Right lobe of liver (tissue), 6 donors: ENCODE measurements at regions of chr17 and their contacts with region 1.

Region 1: GRCh38 chr17:43140396-43141332 is 15.5 kb upstream of the BRCA1 start:
- DNase-seq: no peak
- ATAC-seq: no peak
- H3K4me3 ChIP-seq: no peak overlapping the region
- H3K27ac ChIP-seq: no peak overlapping the region
- H3K4me1 ChIP-seq: no peaks in the 10 kb centered on the region
- H3K27me3 ChIP-seq: no peaks in the 10 kb centered on the region
- CTCF ChIP-seq: no peak
- POLR2A ChIP-seq: no peak

Region 2: DNA sequence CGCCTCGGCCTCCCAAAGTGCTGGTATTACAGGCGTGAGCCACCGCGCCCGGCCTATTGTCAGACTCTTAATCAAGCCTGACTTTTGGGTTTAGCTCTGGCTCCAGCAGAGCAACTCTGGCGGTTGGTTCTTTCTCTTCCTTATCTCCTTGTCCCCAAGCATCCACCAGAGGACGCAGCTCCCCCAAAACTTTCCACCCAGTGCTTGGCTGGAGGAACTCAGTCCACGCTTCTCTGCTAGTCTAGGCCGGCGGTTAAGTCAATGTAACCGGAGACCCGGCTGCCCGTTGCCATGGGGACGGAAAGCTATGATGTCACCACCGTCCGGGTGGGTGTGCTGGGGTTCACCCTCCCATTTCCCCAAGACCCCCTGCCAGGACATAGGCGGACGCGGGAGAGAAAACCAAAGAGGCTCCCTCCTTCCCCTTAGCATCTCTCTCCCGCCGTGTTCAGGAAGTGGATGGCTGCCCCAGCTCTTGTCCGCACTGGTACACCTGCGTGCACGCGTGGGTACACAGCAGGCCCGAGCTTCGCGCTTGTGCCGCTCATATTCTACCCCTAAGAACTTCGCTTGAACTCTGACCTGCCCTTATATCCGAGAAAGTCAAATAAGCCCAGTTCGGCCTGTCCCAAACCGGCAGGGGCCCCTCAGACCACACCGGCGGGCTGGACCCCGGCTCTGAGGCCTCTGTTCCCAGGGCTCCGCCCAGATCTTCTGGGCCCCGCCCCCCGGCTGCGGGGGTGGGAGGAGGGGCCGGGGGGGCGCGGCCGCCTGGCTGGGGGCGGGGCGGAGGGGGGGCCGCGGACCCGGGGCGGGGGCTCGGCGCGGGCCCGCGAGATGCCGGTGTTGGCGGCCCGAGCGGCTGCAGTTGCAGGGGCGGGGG is 116.0 kb before region 1 on chr17 and contains the start of gene RND2:
- intact Hi-C with region 1: loop called in 1 of 2 experiments (anchors 10 kb)
- DNase-seq: peak; percentile 84 to 91 (median 89)
- ATAC-seq: peak; percentile 81 to 86 (median 82)
- H3K4me3 ChIP-seq: peak within 1 kb of the TSS; percentile 34 to 59 (median 34)
- H3K27ac ChIP-seq: peak within 1 kb of the TSS in 2 of 3 donors; percentile 41 to 49
- H3K4me1 ChIP-seq: peaks cover 0 to 12% (median under 1%) of the 10 kb centered on the region in 4 donors
- H3K27me3 ChIP-seq: no peaks in the 10 kb centered on the region
- CTCF ChIP-seq: peak; percentile 75 to 88 (median 78)
- POLR2A ChIP-seq: peak; percentile 19
- total RNA-seq, gene RND2: 0.09 to 3.3 (median 0.64) TPM